Calu3 (cell line): ENCODE measurements at regions of chr4 and their contacts with region 1.

Region 1: DNA sequence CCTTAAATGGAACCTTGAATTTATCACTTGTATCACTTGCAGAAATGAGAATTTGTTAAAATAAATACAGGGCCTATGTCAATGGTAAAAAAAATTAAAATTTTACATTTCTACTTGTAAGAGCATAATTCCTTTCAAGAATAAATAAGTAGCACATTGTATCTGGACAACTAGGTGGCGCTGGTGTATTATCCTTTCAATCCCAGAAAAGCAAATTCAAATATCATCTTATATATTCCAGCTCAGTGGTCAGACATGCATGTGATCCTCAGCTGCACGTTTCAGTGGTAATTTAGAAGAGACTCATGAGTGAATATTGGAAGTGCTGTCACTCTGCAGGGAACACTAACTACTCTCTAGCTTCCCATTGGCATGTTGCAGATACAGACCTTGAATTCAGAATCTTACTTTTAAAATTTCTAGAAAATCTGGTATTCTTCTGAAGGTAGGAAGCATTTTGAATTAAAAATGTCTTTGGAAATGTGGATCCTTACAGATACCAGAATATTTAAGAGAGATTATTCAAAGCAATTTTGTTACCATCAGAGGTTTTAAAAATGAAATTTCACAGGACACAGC is 1414.7 kb upstream of the TENM3 start:
- DNase-seq: peak; percentile 21
- H3K4me3 Mint-ChIP-seq: no peak overlapping the region
- H3K27ac Mint-ChIP-seq: no peak overlapping the region
- H3K4me1 Mint-ChIP-seq: no peaks in the 10 kb centered on the region
- H3K27me3 Mint-ChIP-seq: no peaks in the 10 kb centered on the region
- CTCF ChIP-seq: peak; percentile 41

Region 2: DNA sequence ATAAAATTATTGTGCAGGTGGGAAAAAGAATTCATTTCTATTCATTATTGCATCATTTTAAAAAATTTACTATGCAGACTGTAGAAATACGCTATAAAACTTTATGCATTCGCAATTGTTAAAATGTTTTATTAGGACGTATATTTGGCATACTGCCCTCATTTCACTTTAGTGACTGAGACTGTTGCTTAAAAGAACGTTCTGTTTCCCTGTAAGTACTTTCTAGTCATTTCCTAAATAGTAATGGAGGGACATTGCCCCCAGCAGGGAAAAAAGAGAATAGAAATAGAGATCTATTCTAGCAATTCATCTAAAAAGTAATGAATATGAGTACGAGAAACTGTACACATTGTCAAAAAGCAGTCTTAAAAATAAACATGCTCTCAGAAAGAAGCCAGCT is 118.9 kb after region 1 on chr4:
- CTCF ChIA-PET with region 1: no interaction called
- intact Hi-C with region 1: loop called (anchors 2 kb)
- DNase-seq: no peak
- H3K4me3 Mint-ChIP-seq: no peak overlapping the region
- H3K27ac Mint-ChIP-seq: no peak overlapping the region
- H3K4me1 Mint-ChIP-seq: no peaks in the 10 kb centered on the region
- H3K27me3 Mint-ChIP-seq: no peaks in the 10 kb centered on the region
- CTCF ChIP-seq: no peak